ENCODE measurements at regions of chr12 and their contacts with region 1.

Region 1: GRCh38 chr12:68636268-68636667 is 25.6 kb downstream of the RAP1B start:
- DNase-seq: no peak
- ATAC-seq: peak; percentile 32 to 55 (median 46)
- H3K4me3 ChIP-seq: no peak overlapping the region
- H3K4me3 Mint-ChIP-seq: peak overlapping the region; percentile 70
- H3K27ac ChIP-seq: peak overlapping the region; percentile 49
- H3K27ac Mint-ChIP-seq: peak overlapping the region; percentile 94 to 95
- H3K4me1 ChIP-seq: peaks cover 58% of the 10 kb centered on the region
- H3K4me1 Mint-ChIP-seq: peaks cover 83 to 85% of the 10 kb centered on the region in 2 donors
- H3K27me3 ChIP-seq: no peaks in the 10 kb centered on the region
- H3K27me3 Mint-ChIP-seq: no peaks in the 10 kb centered on the region
- CTCF ChIP-seq: no peak

Region 2: DNA sequence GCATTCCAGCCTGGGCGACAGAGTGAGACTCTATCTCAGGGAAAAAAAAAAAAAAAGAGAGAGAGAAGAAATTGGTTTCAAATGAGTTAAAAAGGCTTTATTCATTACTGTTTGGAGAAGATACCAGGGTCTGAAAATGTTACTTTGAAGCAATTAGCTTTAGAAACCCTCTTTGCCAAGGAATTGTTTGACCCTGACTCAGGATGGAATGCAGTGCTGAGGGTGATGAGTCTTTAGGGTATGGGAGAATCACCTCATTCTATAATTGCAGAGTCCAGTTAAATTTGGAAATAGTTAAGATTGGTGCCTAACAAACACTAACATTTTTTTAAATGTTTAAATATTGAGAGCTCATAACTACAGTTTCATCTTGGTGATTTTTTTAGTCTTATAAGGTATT is 12.3 kb before region 1 on chr12:
- intact Hi-C with region 1: loop called (anchors 2 kb)
- DNase-seq: no peak
- ATAC-seq: no peak
- H3K4me3 ChIP-seq: no peak overlapping the region
- H3K4me3 Mint-ChIP-seq: peak overlapping the region; percentile 78
- H3K27ac ChIP-seq: no peak overlapping the region
- H3K27ac Mint-ChIP-seq: peak overlapping the region; percentile 84 to 95
- H3K4me1 ChIP-seq: peaks cover 43% of the 10 kb centered on the region
- H3K4me1 Mint-ChIP-seq: peaks cover 83 to 93% of the 10 kb centered on the region in 2 donors
- H3K27me3 ChIP-seq: no peaks in the 10 kb centered on the region
- H3K27me3 Mint-ChIP-seq: no peaks in the 10 kb centered on the region
- CTCF ChIP-seq: no peak